ENCODE measurements at regions of chr1 and their contacts with region 1.

Region 1: GRCh38 chr1:39098546-39099250 is 72.5 kb downstream of the NDUFS5 start:
- DNase-seq: peak; percentile 76
- H3K4me3 Mint-ChIP-seq: no peak overlapping the region
- H3K27ac Mint-ChIP-seq: peak overlapping the region; percentile 46
- H3K4me1 Mint-ChIP-seq: peaks cover 22% of the 10 kb centered on the region
- H3K27me3 Mint-ChIP-seq: no peaks in the 10 kb centered on the region

Region 2: GRCh38 chr1:38859561-38860453 is 238.9 kb before region 1 on chr1 and contains the start of gene RRAGC:
- CTCF ChIA-PET with region 1: no interaction called
- POLR2A ChIA-PET with region 1: no interaction called
- intact Hi-C with region 1: loop called (anchors 5 kb)
- DNase-seq: peak; percentile 99
- H3K4me3 Mint-ChIP-seq: peak within 1 kb of the TSS; percentile 99
- H3K27ac Mint-ChIP-seq: peak within 1 kb of the TSS; percentile 95
- H3K4me1 Mint-ChIP-seq: peaks cover 71% of the 10 kb centered on the region
- H3K27me3 Mint-ChIP-seq: no peaks in the 10 kb centered on the region
- total RNA-seq, gene RRAGC: 27.6 to 29.7 TPM

Region 3: GRCh38 chr1:38891753-38892152 is 206.9 kb before region 1 on chr1:
- CTCF ChIA-PET with region 1: no interaction called
- POLR2A ChIA-PET with region 1: no interaction called
- intact Hi-C with region 1: no loop called
- DNase-seq: no peak
- H3K4me3 Mint-ChIP-seq: no peak overlapping the region
- H3K27ac Mint-ChIP-seq: no peak overlapping the region
- H3K4me1 Mint-ChIP-seq: no peaks in the 10 kb centered on the region
- H3K27me3 Mint-ChIP-seq: no peaks in the 10 kb centered on the region

Region 4: GRCh38 chr1:39183503-39184353 is 85.0 kb after region 1 on chr1:
- CTCF ChIA-PET with region 1: interaction called, 16 read pairs
- POLR2A ChIA-PET with region 1: no interaction called
- intact Hi-C with region 1: loop called (anchors 1 kb)
- DNase-seq: peak; percentile 91
- H3K4me3 Mint-ChIP-seq: peak overlapping the region; percentile 11
- H3K27ac Mint-ChIP-seq: peak overlapping the region; percentile 91
- H3K4me1 Mint-ChIP-seq: peaks cover 51% of the 10 kb centered on the region
- H3K27me3 Mint-ChIP-seq: no peaks in the 10 kb centered on the region

Region 5: GRCh38 chr1:39258146-39258924 is 159.6 kb after region 1 on chr1:
- CTCF ChIA-PET with region 1: interaction called, 43 read pairs
- POLR2A ChIA-PET with region 1: no interaction called
- intact Hi-C with region 1: loop called (anchors 2 kb)
- DNase-seq: peak; percentile 74
- H3K4me3 Mint-ChIP-seq: no peak overlapping the region
- H3K27ac Mint-ChIP-seq: peak overlapping the region; percentile 56
- H3K4me1 Mint-ChIP-seq: peaks cover 44% of the 10 kb centered on the region
- H3K27me3 Mint-ChIP-seq: no peaks in the 10 kb centered on the region

Region 6: DNA sequence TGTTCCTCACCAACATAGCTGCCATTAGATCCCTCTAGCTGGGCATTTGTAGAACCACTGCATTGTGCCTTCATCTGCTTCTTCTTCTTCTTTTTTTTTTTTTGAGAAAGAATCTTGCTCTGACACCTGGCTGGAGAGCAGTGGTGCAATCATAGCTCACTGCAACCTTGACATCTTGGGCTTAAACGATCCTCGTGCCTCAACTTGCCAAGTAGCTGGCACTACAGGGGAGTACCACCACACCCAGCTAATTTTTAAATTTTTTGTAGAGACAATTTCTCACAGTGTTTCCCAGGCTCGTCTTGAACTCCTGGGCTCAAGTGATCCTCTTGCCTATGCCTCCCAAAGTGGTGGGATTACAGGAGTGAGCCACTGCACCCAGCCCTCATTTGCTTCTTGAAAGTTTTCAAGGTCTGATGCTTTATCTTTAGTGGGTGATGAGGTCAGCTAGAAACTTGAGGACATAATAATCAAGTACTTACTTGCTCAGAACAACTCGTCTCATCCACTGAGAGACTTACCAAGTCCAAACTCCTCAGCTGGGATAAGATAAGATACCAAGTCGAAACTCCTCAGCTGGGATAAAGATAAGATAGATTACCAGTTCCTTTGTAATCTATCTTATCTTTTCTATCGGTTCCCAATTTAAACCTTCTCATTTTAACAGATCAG is 177.3 kb after region 1 on chr1:
- CTCF ChIA-PET with region 1: interaction called, 21 read pairs
- POLR2A ChIA-PET with region 1: no interaction called
- intact Hi-C with region 1: no loop called
- DNase-seq: no peak
- H3K4me3 Mint-ChIP-seq: no peak overlapping the region
- H3K27ac Mint-ChIP-seq: no peak overlapping the region
- H3K4me1 Mint-ChIP-seq: peaks cover 59% of the 10 kb centered on the region
- H3K27me3 Mint-ChIP-seq: no peaks in the 10 kb centered on the region

Region 7: DNA sequence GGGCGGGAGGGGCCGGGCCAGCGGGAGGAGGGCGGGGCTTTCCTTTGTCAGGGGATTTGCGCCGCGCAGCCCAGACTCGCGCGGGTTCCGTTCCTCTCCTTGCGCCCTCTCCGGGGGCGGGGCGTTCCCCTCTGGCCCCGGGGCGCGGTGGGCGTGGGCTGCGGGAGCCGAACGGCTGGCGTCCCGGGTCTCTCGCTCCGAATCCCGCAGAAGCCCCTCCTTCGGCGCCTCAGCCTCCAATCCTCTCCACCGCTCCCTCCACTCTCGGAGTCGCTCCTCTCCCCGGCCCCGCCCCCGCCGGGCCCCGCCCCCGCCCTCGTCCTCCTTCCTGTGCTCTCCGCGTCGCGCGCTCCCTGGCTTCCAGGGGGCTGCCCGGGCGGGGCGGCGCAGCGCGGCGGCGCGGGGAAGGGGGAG is 309.9 kb after region 1 on chr1:
- CTCF ChIA-PET with region 1: interaction called, 23 read pairs
- POLR2A ChIA-PET with region 1: no interaction called
- intact Hi-C with region 1: loop called (anchors 2 kb)
- DNase-seq: peak; percentile 86
- H3K4me3 Mint-ChIP-seq: peak overlapping the region; percentile 82
- H3K27ac Mint-ChIP-seq: no peak overlapping the region
- H3K4me1 Mint-ChIP-seq: peaks cover 68% of the 10 kb centered on the region
- H3K27me3 Mint-ChIP-seq: no peaks in the 10 kb centered on the region

Region 8: DNA sequence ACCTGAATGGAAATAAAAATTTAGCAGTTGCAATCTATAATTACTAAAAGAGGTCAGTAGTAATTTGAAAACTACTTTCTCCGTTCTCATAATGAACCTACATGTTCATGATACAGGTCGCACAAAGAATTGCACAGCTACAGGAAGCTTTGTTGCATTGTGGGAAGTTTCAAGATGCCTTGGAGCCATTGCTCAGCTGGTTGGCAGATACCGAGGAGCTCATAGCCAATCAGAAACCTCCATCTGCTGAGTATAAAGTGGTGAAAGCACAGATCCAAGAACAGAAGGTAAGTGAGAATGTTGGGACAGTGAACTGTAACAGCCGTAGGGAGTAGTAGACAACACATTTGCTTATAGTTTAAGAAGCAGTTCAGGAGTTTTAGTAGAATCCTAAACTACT is 323.9 kb after region 1 on chr1:
- CTCF ChIA-PET with region 1: no interaction called
- POLR2A ChIA-PET with region 1: no interaction called
- intact Hi-C with region 1: no loop called
- DNase-seq: peak; percentile 33
- H3K4me3 Mint-ChIP-seq: no peak overlapping the region
- H3K27ac Mint-ChIP-seq: peak overlapping the region; percentile 15
- H3K4me1 Mint-ChIP-seq: peaks cover 36% of the 10 kb centered on the region
- H3K27me3 Mint-ChIP-seq: no peaks in the 10 kb centered on the region

Region 9: GRCh38 chr1:39538588-39539465 is 440.1 kb after region 1 on chr1:
- CTCF ChIA-PET with region 1: interaction called, 31 read pairs
- POLR2A ChIA-PET with region 1: no interaction called
- intact Hi-C with region 1: loop called (anchors 2 kb)
- DNase-seq: peak; percentile 57
- H3K4me3 Mint-ChIP-seq: no peak overlapping the region
- H3K27ac Mint-ChIP-seq: no peak overlapping the region
- H3K4me1 Mint-ChIP-seq: no peaks in the 10 kb centered on the region
- H3K27me3 Mint-ChIP-seq: no peaks in the 10 kb centered on the region

Measured in activated CD4-positive, alpha-beta memory T cell treated with anti-CD3 and anti-CD28 coated beads for 36 hours (primary cell).